PC-3 (cell line): ENCODE measurements at regions of chr2 and their contacts with region 1.

Region 1: DNA sequence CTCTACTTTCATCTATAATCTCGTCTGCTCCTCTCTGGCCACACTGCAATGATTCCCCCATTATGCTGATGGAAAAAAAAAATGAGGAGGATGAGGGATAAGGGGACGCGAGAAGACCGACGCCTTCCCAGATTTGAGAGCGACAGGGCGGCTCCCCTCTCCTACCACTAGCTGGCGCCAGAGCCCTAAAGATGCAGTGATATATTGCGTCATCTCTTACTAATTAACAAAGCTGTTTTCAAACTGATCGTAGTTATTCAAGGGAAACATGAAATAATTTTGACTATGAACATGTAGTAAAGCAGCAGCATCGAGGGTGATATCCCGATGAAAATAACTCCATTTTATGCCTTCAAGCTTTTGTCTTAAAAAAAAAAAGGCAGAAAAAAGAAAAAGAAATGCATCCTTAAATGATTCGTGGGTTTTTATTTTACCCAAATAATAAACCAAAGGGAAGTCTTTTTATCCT is 48.0 kb upstream of the HNRNPA3 start:
- DNase-seq: peak; percentile 83
- ATAC-seq: peak; percentile 51
- H3K4me3 ChIP-seq: peak overlapping the region; percentile 63
- H3K27ac ChIP-seq: no peak overlapping the region
- H3K4me1 ChIP-seq: peaks cover 40% of the 10 kb centered on the region
- H3K27me3 ChIP-seq: no peaks in the 10 kb centered on the region
- CTCF ChIP-seq: peak; percentile 99

Region 2: GRCh38 chr2:177229448-177230242 is 65.0 kb after region 1 on chr2:
- CTCF ChIA-PET with region 1: interaction called, 11 read pairs
- POLR2A ChIA-PET with region 1: interaction called, 4 read pairs
- intact Hi-C with region 1: no loop called
- DNase-seq: no peak
- ATAC-seq: no peak; the same call in 1 of the 2 replicates
- H3K4me3 ChIP-seq: no peak overlapping the region
- H3K27ac ChIP-seq: no peak overlapping the region
- H3K4me1 ChIP-seq: no peaks in the 10 kb centered on the region
- H3K27me3 ChIP-seq: no peaks in the 10 kb centered on the region
- CTCF ChIP-seq: no peak

Region 3: DNA sequence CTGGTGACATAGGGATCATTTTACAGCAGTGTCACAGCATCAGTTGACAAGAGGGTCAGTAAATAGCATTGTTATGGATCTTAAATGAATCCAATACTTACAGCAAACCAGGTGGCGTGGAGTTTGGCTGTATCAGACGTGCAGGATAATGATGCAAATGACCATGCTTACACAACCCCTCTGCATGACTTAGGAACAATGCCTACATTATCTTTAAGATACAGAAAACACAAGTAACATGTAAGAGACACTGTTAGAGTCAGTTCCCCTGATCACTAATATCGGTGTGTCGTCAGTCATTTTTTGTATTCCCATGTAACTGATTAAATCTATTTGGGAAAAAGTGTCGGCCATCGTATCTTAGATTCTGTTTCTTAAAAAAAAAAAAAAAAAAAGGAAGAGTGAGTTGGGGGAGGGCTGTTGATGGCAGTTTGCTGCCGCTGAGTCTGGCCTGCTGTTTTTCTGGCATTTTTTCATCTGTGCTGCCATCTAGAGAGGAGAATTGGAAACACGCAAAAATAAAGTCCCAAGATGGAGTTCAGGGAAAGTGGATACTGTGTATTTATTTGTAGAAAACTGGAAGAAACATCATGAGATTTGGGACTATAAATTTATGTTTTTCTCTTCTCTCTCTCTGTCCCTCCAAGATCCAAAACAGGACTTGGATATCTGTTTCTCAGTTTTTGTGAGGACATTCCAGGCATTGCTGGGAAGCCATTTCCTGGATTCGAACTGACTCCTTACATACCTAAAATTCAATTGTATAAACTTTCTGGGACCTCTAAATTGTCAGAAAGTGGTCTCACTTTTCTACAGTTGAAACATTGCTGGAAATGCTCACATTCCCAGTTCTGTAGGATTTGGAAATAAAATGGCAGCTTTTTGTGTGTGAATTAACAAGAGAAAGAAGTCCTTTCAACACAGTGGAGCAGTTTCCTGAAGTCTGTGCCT is 167.7 kb after region 1 on chr2:
- CTCF ChIA-PET with region 1: interaction called, 3 read pairs
- POLR2A ChIA-PET with region 1: no interaction called
- intact Hi-C with region 1: loop called (anchors 1 kb)
- DNase-seq: peak; percentile 75
- ATAC-seq: peak; percentile 70
- H3K4me3 ChIP-seq: no peak overlapping the region
- H3K27ac ChIP-seq: no peak overlapping the region
- H3K4me1 ChIP-seq: peaks cover 10% of the 10 kb centered on the region
- H3K27me3 ChIP-seq: no peaks in the 10 kb centered on the region
- CTCF ChIP-seq: peak; percentile 76

Region 4: GRCh38 chr2:177419274-177419673 is 254.7 kb after region 1 on chr2:
- CTCF ChIA-PET with region 1: no interaction called
- POLR2A ChIA-PET with region 1: no interaction called
- intact Hi-C with region 1: loop called (anchors 1 kb)
- DNase-seq: peak; percentile 28
- ATAC-seq: no peak
- H3K4me3 ChIP-seq: no peak overlapping the region
- H3K27ac ChIP-seq: no peak overlapping the region
- H3K4me1 ChIP-seq: peaks cover 9% of the 10 kb centered on the region; the same call in 1 of the 2 replicates
- H3K27me3 ChIP-seq: no peaks in the 10 kb centered on the region
- CTCF ChIP-seq: no peak